ENCODE measurements at regions of chr3 and their contacts with region 1.

Region 1: DNA sequence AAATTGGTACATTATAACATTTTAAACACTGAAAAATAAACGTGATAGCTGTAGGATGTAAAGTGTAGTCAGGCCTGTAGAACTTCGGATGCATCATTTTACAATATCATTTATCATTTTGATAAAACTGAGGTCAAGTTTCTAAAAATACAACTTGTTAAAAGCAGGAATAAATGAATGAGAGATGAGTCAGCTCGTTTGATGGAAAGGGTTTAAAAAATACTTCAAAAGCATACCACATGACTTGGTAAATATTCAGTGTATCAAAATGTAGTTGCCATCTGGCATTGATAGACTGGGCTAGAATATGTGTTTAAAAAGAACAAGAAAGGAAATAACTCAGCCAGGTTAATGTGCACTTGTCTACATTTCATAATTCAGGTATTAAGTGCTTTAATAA is 357.0 kb downstream of the TIGIT start:
- DNase-seq: no peak
- ATAC-seq: no peak
- H3K4me3 ChIP-seq: no peak overlapping the region
- H3K4me3 Mint-ChIP-seq: no peak overlapping the region
- H3K27ac ChIP-seq: no peak overlapping the region
- H3K27ac Mint-ChIP-seq: no peak overlapping the region
- H3K4me1 ChIP-seq: no peaks in the 10 kb centered on the region
- H3K4me1 Mint-ChIP-seq: peaks cover 8 to 21% (median 14%) of the 10 kb centered on the region in 3 donors
- H3K27me3 ChIP-seq: no peaks in the 10 kb centered on the region
- H3K27me3 Mint-ChIP-seq: no peaks in the 10 kb centered on the region

Region 2: GRCh38 chr3:114582929-114583328 is 67.9 kb before region 1 on chr3:
- CTCF ChIA-PET with region 1: no interaction called
- POLR2A ChIA-PET with region 1: interaction called in 1 of 2 experiments, 13 read pairs
- DNase-seq: no peak
- ATAC-seq: no peak
- H3K4me3 ChIP-seq: no peak overlapping the region
- H3K4me3 Mint-ChIP-seq: no peak overlapping the region
- H3K27ac ChIP-seq: no peak overlapping the region
- H3K27ac Mint-ChIP-seq: no peak overlapping the region
- H3K4me1 ChIP-seq: no peaks in the 10 kb centered on the region
- H3K4me1 Mint-ChIP-seq: peaks cover 0 to 16% (median 7%) of the 10 kb centered on the region in 3 donors
- H3K27me3 ChIP-seq: no peaks in the 10 kb centered on the region
- H3K27me3 Mint-ChIP-seq: no peaks in the 10 kb centered on the region

Region 3: GRCh38 chr3:114632757-114633424 is 17.9 kb before region 1 on chr3:
- CTCF ChIA-PET with region 1: no interaction called
- POLR2A ChIA-PET with region 1: interaction called in 1 of 2 experiments, 14 read pairs
- DNase-seq: no peak
- ATAC-seq: no peak
- H3K4me3 ChIP-seq: no peak overlapping the region
- H3K4me3 Mint-ChIP-seq: no peak overlapping the region
- H3K27ac ChIP-seq: no peak overlapping the region
- H3K27ac Mint-ChIP-seq: no peak overlapping the region
- H3K4me1 ChIP-seq: no peaks in the 10 kb centered on the region
- H3K4me1 Mint-ChIP-seq: peaks cover 0 to 2% (median 0%) of the 10 kb centered on the region in 3 donors
- H3K27me3 ChIP-seq: no peaks in the 10 kb centered on the region
- H3K27me3 Mint-ChIP-seq: no peaks in the 10 kb centered on the region

Region 4: DNA sequence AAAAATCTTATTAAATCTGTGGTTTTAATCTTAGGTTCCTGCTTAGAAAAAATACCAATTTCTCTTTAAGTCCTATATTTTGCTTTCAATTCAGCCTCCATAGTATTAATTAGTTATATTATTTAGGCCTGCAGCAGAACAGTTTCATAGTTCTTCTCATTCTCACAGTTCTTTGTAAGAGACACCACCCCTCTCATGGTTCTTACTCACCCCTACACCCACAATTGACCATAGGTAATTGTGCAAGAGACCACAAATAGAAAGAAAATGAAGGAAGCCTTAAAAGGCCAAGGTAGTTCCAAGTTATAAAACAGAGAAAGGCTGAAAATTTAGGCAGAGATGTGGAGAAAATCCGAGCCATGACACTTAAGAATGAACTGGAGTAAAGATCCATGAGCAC is 58.3 kb after region 1 on chr3:
- CTCF ChIA-PET with region 1: no interaction called
- POLR2A ChIA-PET with region 1: no interaction called
- DNase-seq: no peak
- ATAC-seq: no peak
- H3K4me3 ChIP-seq: no peak overlapping the region
- H3K4me3 Mint-ChIP-seq: no peak overlapping the region
- H3K27ac ChIP-seq: no peak overlapping the region
- H3K27ac Mint-ChIP-seq: no peak overlapping the region
- H3K4me1 ChIP-seq: no peaks in the 10 kb centered on the region
- H3K4me1 Mint-ChIP-seq: peaks cover 2 to 21% (median 16%) of the 10 kb centered on the region in 3 donors
- H3K27me3 ChIP-seq: no peaks in the 10 kb centered on the region
- H3K27me3 Mint-ChIP-seq: no peaks in the 10 kb centered on the region

Measured in T-cell (primary cell).